Activated T-helper 1 cell treated with anti-CD3 and anti-CD28 coated beads, Interleukin-12 subunit alpha, Interleukin-12 subunit beta, Interleukin-2, Interleukin-4 antibody, amounts not matched to agents 30 ng/mL and 10 ng/mL and 1 ng/mL, durations not matched to agents 14 hours and 24 hours and 36 hours (primary cell): ENCODE measurements at regions of chr11 and their contacts with region 1.

Region 1: DNA sequence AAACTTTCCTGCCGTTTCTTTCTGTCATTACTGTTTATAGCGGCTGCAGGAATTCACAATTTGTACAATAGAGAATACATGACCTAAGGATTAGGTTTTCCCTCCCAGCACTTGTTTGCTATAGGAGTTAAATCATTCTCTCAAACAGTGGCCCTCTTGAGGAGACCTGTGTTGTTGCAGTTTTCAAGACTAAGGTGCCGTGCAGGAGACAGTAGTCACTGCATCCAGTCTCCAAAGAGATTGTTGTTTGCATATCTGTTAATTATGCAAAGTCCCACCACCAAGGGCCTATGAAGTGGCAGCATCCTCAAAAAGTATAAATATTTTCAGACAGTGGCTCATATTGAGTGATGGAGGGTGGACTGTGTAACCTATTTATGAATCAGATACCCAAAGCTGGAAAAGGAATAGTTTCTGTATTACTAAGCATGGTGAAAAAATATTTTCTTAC is 2.3 kb downstream of the PRSS23 start:
- DNase-seq: no peak
- H3K4me3 Mint-ChIP-seq: peak overlapping the region; percentile 92
- H3K27ac Mint-ChIP-seq: peak overlapping the region; percentile 69
- H3K4me1 Mint-ChIP-seq: peaks cover 77% of the 10 kb centered on the region
- H3K27me3 Mint-ChIP-seq: peaks cover 24% of the 10 kb centered on the region

Region 2: GRCh38 chr11:85826116-85826855 is 976.3 kb before region 1 on chr11:
- intact Hi-C with region 1: loop called (anchors 5 kb)
- DNase-seq: no peak
- H3K4me3 Mint-ChIP-seq: peak overlapping the region; percentile 1
- H3K27ac Mint-ChIP-seq: peak overlapping the region; percentile 87
- H3K4me1 Mint-ChIP-seq: peaks cover 74% of the 10 kb centered on the region
- H3K27me3 Mint-ChIP-seq: no peaks in the 10 kb centered on the region

Region 3: GRCh38 chr11:86218125-86219084 is 584.2 kb before region 1 on chr11:
- intact Hi-C with region 1: loop called (anchors 1 kb)
- DNase-seq: peak; percentile 42
- H3K4me3 Mint-ChIP-seq: peak overlapping the region; percentile 40
- H3K27ac Mint-ChIP-seq: peak overlapping the region; percentile 81
- H3K4me1 Mint-ChIP-seq: peaks cover 81% of the 10 kb centered on the region
- H3K27me3 Mint-ChIP-seq: no peaks in the 10 kb centered on the region

Region 4: DNA sequence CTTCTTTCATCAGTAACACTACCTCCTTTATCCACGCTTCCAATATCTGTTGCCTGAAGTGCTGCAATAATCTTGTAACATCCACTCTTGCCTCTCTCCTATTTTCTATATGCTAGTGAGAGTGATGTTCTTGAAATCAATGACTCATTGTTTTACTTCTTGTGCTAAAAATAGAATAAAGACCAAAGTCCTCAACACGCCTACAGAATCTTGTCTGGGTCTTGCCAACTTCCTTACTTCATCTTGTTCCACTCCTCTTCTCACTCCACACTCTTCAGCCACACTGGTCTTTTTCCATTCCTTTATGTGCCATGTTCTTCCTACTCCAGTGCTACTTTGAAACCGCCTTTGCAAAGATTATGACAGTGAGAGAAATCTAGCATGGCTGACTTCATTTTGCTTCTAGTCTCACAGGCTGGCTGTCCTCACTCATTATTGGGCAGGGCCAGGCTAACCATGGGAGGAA is 291.5 kb before region 1 on chr11:
- intact Hi-C with region 1: loop called (anchors 1 kb)
- DNase-seq: no peak
- H3K4me3 Mint-ChIP-seq: no peak overlapping the region
- H3K27ac Mint-ChIP-seq: no peak overlapping the region
- H3K4me1 Mint-ChIP-seq: no peaks in the 10 kb centered on the region
- H3K27me3 Mint-ChIP-seq: no peaks in the 10 kb centered on the region

Region 5: DNA sequence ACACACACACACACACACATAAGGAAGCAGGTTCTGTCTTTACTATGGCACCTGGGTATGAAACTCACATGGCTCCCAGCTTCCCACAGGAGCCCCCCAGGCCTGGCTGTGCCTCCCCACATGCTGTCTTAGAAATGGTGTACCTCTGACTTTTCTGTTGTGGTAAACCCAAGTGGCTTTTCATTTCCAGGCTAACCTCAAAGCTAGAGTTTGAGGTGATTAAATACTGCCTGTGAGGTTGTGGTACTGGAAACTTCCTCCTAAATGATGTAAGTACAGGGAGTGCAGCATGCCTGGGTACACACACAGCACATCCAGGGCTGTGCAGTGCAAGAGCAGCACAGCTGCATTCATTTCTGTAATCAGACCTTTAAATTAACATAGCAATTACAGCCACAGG is 164.6 kb before region 1 on chr11:
- intact Hi-C with region 1: loop called (anchors 1 kb)
- DNase-seq: peak; percentile 40
- H3K4me3 Mint-ChIP-seq: no peak overlapping the region
- H3K27ac Mint-ChIP-seq: peak overlapping the region; percentile 33
- H3K4me1 Mint-ChIP-seq: peaks cover 51% of the 10 kb centered on the region
- H3K27me3 Mint-ChIP-seq: peaks cover 20% of the 10 kb centered on the region

Region 6: DNA sequence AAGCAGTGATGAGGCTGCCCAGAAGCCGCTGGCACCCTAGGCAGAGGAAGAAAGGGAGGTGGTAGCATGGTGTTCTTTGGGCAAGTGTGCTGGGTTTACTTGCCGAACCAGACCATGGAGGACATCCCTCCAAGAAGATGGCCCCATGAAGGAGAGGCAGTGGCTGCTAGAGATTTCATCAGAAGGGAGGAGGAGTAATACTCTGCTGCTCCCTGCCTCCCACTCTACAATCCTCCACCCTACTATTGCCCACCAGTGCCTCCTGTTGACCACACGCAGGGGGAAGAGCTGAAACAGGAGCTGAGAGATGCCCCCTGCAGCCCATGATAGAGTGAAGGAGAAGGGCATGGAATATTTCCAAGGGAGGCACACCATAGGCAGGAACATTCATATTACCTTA is 53.2 kb before region 1 on chr11:
- intact Hi-C with region 1: no loop called
- DNase-seq: no peak
- H3K4me3 Mint-ChIP-seq: no peak overlapping the region
- H3K27ac Mint-ChIP-seq: no peak overlapping the region
- H3K4me1 Mint-ChIP-seq: no peaks in the 10 kb centered on the region
- H3K27me3 Mint-ChIP-seq: peaks cover 11% of the 10 kb centered on the region

Region 7: GRCh38 chr11:86818466-86819192 is 16.0 kb after region 1 on chr11:
- intact Hi-C with region 1: loop called (anchors 1 kb)
- DNase-seq: no peak
- H3K4me3 Mint-ChIP-seq: no peak overlapping the region
- H3K27ac Mint-ChIP-seq: no peak overlapping the region
- H3K4me1 Mint-ChIP-seq: peaks cover 31% of the 10 kb centered on the region
- H3K27me3 Mint-ChIP-seq: peaks cover 24% of the 10 kb centered on the region